ENCODE measurements at regions of chr3 and their contacts with region 1.

Region 1: GRCh38 chr3:48847504-48848423 is at the start of gene PRKAR2A:
- DNase-seq: peak; percentile 78 to 96 (median 88)
- H3K4me3 ChIP-seq: peak within 1 kb of the TSS; percentile 49 to 99 (median 93)
- H3K27ac ChIP-seq: peak within 1 kb of the TSS; percentile 77 to 97 (median 94)
- H3K27me3 ChIP-seq: no peaks in the 10 kb centered on the region
- CTCF ChIP-seq: peak in 28 of 56 donors; percentile 5 to 53 (median 29)
- total RNA-seq, gene PRKAR2A: 19.8 to 50.2 (median 30.1) TPM

Region 2: GRCh38 chr3:48685602-48686511 is 161.9 kb before region 1 on chr3 and contains the start of gene NCKIPSD:
- intact Hi-C with region 1: loop called in 1 of 2 experiments (anchors 10 kb)
- DNase-seq: peak; percentile 77 to 90 (median 86)
- H3K4me3 ChIP-seq: peak within 1 kb of the TSS; percentile 70 to 100 (median 95)
- H3K27ac ChIP-seq: peak within 1 kb of the TSS in 57 of 59 donors; percentile 15 to 97 (median 87)
- H3K27me3 ChIP-seq: no peaks in the 10 kb centered on the region
- CTCF ChIP-seq: peak; percentile 54 to 99 (median 92)
- total RNA-seq, gene NCKIPSD: 66.3 to 147 (median 103) TPM

Region 3: DNA sequence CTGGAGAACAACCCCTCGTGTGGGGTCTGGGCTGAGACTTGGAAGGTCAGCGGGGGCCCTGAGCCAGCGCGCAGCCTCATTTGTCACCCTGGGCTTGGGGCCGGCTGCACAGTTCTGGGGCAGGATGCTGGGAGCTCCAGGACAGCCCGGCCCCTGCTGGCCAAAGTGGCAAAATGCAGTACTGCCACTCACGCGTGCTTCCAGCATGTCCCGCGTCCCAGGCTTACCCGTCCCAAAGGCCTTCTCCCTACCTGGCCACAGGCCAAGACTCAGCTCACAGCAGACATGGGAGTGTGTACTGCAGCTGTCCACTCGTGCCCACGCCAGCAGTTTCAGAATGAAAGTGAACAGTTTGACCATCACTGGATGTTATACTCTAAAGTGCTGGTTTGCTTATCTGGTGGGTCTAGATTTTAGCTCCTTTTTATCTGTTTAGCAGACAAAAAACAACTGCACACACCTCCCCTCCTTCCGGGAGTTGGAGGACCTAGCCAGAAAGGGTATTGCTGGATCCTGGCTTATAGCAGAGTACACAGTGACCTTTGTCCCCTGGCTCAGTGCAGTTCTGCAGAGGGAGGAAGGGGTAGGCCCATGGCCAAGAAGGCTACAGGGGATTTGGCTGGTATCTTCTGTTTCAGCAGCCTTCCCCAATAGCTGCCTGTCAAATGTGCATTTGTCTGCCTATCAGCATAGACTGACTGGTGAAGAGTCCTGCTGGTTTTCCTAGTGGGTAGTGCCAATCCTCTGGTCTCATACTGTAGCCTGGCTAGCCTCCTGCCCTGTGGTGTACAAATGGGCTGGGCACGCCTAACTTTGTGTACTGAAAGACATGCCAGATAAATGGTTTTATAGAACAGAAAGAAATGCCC is 107.6 kb before region 1 on chr3:
- intact Hi-C with region 1: loop called in 1 of 2 experiments (anchors 5 kb)
- DNase-seq: peak; percentile 88 to 94 (median 92)
- H3K4me3 ChIP-seq: peak overlapping the region in 43 of 59 donors; percentile 0 to 46 (median 21)
- H3K27ac ChIP-seq: peak overlapping the region; percentile 42 to 100 (median 94)
- H3K27me3 ChIP-seq: no peaks in the 10 kb centered on the region
- CTCF ChIP-seq: peak; percentile 53 to 93 (median 85)

Region 4: GRCh38 chr3:48918388-48919214 is 70.8 kb after region 1 on chr3 and contains the start of gene ARIH2:
- intact Hi-C with region 1: loop called in 1 of 2 experiments (anchors 5 kb)
- DNase-seq: peak; percentile 84 to 96 (median 91)
- H3K4me3 ChIP-seq: peak within 1 kb of the TSS; percentile 56 to 98 (median 94)
- H3K27ac ChIP-seq: peak within 1 kb of the TSS; percentile 66 to 99 (median 96)
- H3K27me3 ChIP-seq: no peaks in the 10 kb centered on the region
- CTCF ChIP-seq: peak in 42 of 56 donors; percentile 4 to 67 (median 42)
- total RNA-seq, gene ARIH2: 88.9 to 207 (median 127) TPM